ENCODE measurements at regions of chr15 and their contacts with region 1.

Region 1: GRCh38 chr15:98647774-98648653 is at the start of gene IGF1R:
- DNase-seq: peak; percentile 75 to 94 (median 85)
- ATAC-seq: peak; percentile 74
- H3K4me3 ChIP-seq: peak within 1 kb of the TSS; percentile 74 to 88
- H3K4me3 Mint-ChIP-seq: peak within 1 kb of the TSS; percentile 89
- H3K27ac ChIP-seq: peak within 1 kb of the TSS in 1 of 2 experiments; percentile 88
- H3K27ac Mint-ChIP-seq: peak within 1 kb of the TSS; percentile 95
- H3K4me1 ChIP-seq: peaks cover 9% of the 10 kb centered on the region
- H3K4me1 Mint-ChIP-seq: peaks cover 28% of the 10 kb centered on the region
- H3K27me3 ChIP-seq: peaks cover 0 to 10% of the 10 kb centered on the region in 2 experiments
- H3K27me3 Mint-ChIP-seq: peaks cover 15% of the 10 kb centered on the region
- CTCF ChIP-seq: no peak
- total RNA-seq, gene IGF1R: 30.1 to 33.8 TPM

Region 2: GRCh38 chr15:98581715-98582114 is 66.3 kb before region 1 on chr15:
- CTCF ChIA-PET with region 1: interaction called, 11 read pairs
- POLR2A ChIA-PET with region 1: interaction called, 4 read pairs
- intact Hi-C with region 1: loop called in 1 of 2 experiments (anchors 1 kb)
- DNase-seq: peak in 2 of 9 experiments; percentile 8 to 44
- ATAC-seq: peak; percentile 56
- H3K4me3 ChIP-seq: no peak overlapping the region
- H3K4me3 Mint-ChIP-seq: no peak overlapping the region
- H3K27ac ChIP-seq: no peak overlapping the region
- H3K27ac Mint-ChIP-seq: no peak overlapping the region
- H3K4me1 ChIP-seq: peaks cover 10% of the 10 kb centered on the region
- H3K4me1 Mint-ChIP-seq: peaks cover 5% of the 10 kb centered on the region
- H3K27me3 ChIP-seq: peaks cover 7 to 13% of the 10 kb centered on the region in 2 experiments
- H3K27me3 Mint-ChIP-seq: peaks cover 32% of the 10 kb centered on the region
- CTCF ChIP-seq: peak; percentile 43

Region 3: DNA sequence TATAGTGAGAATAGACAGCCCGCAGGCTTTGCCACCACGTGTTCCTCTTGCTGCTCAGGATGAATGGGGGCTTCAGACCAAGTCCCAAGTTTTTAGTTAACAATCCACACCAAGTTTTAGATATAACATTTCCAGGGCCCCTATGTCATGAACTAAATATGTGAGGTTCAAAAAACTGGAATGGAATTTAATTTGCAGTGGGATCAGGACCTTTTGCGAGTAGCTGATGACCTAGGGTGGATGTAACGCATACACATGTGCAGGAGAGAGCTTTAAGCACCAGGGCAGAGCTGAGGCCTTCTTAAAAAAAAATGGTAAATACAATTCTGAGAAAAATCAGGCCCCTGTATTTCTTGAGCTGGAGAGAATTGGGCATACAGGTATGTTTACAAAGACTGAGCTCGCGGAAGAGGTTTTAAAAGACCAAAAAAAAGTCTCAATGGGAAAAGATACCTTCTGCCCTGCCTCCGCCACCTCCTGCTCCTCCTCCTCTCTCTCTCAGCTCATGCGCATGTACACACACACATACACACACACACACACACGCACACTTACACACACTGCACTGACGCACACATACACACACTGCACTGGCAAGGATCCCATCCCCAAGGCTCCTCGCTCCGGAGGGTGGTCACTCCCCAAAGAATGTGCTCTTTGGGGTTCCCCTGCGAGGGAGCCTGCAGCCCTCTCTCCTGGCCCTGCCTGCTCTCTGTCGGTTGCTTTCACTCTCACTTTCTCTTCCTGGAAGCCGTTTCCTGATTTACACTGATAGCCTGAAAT is 47.9 kb before region 1 on chr15:
- CTCF ChIA-PET with region 1: no interaction called
- POLR2A ChIA-PET with region 1: interaction called, 6 read pairs
- intact Hi-C with region 1: loop called in 1 of 2 experiments (anchors 1 kb)
- DNase-seq: peak in 8 of 9 experiments; percentile 4 to 66 (median 27)
- ATAC-seq: peak; percentile 79
- H3K4me3 ChIP-seq: peak overlapping the region; percentile 18 to 40
- H3K4me3 Mint-ChIP-seq: peak overlapping the region; percentile 93
- H3K27ac ChIP-seq: peak overlapping the region; percentile 6 to 17
- H3K27ac Mint-ChIP-seq: peak overlapping the region; percentile 93
- H3K4me1 ChIP-seq: peaks cover 10% of the 10 kb centered on the region
- H3K4me1 Mint-ChIP-seq: peaks cover 20% of the 10 kb centered on the region
- H3K27me3 ChIP-seq: no peaks in the 10 kb centered on the region
- H3K27me3 Mint-ChIP-seq: no peaks in the 10 kb centered on the region
- CTCF ChIP-seq: no peak

Region 4: GRCh38 chr15:98658831-98659699 is 11.1 kb after region 1 on chr15:
- CTCF ChIA-PET with region 1: interaction called, 9 read pairs
- POLR2A ChIA-PET with region 1: interaction called, 5 read pairs
- intact Hi-C with region 1: loop called in 1 of 2 experiments (anchors 1 kb)
- DNase-seq: peak in 6 of 9 experiments; percentile 7 to 70 (median 36)
- ATAC-seq: peak; percentile 66
- H3K4me3 ChIP-seq: no peak overlapping the region
- H3K4me3 Mint-ChIP-seq: no peak overlapping the region
- H3K27ac ChIP-seq: no peak overlapping the region
- H3K27ac Mint-ChIP-seq: no peak overlapping the region
- H3K4me1 ChIP-seq: peaks cover 21% of the 10 kb centered on the region
- H3K4me1 Mint-ChIP-seq: peaks cover 52% of the 10 kb centered on the region
- H3K27me3 ChIP-seq: no peaks in the 10 kb centered on the region
- H3K27me3 Mint-ChIP-seq: peaks cover 1% of the 10 kb centered on the region
- CTCF ChIP-seq: peak; percentile 96

Region 5: DNA sequence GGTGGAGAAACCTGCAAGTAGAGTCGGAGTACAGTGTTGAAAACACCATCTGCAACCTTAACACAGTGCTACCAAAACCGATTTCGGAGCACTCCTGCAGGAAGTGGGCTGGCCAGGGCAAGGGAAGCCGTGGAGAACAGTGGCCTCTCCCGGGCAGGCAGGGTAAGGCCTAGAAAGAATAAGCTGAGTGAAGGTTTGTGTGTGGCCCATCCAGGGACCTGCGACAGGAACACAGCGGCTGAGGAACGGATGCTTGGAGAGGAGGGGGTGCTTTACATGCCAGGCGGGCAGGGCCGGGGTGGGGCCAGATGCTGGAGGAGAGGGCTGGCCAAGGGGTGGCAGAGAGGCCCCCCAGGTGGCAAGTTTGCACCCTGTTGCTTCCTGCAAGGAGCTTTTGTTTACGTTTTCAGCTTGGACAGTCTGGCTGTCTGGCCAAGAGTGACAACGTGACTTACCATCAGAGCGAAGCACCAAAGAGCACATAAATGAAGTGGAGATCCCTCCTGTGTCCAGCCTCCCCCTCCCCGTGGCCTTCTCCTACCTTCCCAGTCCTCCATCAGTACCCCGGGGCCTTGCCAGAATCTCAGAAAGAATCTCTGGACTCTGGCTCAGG is 203.1 kb after region 1 on chr15:
- CTCF ChIA-PET with region 1: no interaction called
- POLR2A ChIA-PET with region 1: interaction called, 3 read pairs
- intact Hi-C with region 1: loop called in 1 of 2 experiments (anchors 1 kb)
- DNase-seq: peak; percentile 34 to 83 (median 64)
- ATAC-seq: peak; percentile 67
- H3K4me3 ChIP-seq: peak overlapping the region in 1 of 2 experiments; percentile 59
- H3K4me3 Mint-ChIP-seq: peak overlapping the region; percentile 94
- H3K27ac ChIP-seq: peak overlapping the region in 1 of 2 experiments; percentile 70
- H3K27ac Mint-ChIP-seq: peak overlapping the region; percentile 94
- H3K4me1 ChIP-seq: peaks cover 31% of the 10 kb centered on the region
- H3K4me1 Mint-ChIP-seq: peaks cover 54% of the 10 kb centered on the region
- H3K27me3 ChIP-seq: no peaks in the 10 kb centered on the region
- H3K27me3 Mint-ChIP-seq: no peaks in the 10 kb centered on the region
- CTCF ChIP-seq: peak; percentile 68

Region 6: DNA sequence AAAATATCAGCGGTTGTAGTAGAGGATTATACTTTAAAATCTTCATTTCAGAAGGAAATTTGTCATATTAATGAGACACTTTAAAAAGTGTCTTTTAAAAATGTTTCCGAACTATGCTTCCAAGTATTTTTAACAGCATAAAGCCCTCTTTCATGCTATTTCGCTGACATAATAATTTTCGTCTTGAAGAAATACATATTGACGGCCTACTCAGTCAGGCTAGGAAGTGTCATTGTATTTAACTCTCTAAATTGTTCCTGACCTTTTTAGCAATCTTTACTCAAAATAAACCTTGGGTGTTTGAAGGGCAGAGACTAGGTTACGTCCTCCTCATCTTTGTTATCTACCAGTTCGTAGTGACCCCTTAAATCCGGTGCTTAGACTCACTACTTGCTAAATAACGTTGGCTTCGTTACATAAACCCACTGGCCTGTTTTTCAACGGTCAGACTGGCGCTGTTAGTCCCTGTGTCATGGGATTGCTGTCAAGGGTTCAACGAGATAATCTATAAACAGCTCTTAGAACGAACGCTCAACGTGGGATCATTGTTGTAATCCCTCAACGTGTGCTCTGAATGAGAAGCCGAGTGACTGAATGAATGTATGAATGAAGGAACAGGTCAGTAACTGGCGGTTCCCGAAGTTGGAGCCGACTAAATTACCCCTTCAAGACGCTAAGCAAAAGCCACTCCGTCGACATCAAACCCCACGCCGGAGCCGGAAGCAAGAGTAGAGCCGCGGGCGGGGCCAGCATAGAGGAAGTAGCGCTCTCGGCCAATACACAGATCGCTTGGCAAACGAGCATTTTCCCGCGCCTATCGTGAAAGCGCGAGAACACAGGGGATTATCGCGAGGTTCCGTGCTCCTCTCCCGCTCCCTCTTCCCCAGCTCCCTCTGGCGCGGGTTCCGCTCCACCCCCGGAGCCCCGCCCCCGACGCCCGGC is 602.8 kb after region 1 on chr15:
- CTCF ChIA-PET with region 1: no interaction called
- POLR2A ChIA-PET with region 1: interaction called, 4 read pairs
- intact Hi-C with region 1: loop called in 1 of 2 experiments (anchors 5 kb)
- DNase-seq: peak; percentile 83 to 98 (median 92)
- ATAC-seq: peak; percentile 95
- H3K4me3 ChIP-seq: peak overlapping the region; percentile 55 to 59
- H3K4me3 Mint-ChIP-seq: peak overlapping the region; percentile 90
- H3K27ac ChIP-seq: peak overlapping the region; percentile 25 to 79
- H3K27ac Mint-ChIP-seq: peak overlapping the region; percentile 89
- H3K4me1 ChIP-seq: peaks cover 19% of the 10 kb centered on the region
- H3K4me1 Mint-ChIP-seq: peaks cover 29% of the 10 kb centered on the region
- H3K27me3 ChIP-seq: no peaks in the 10 kb centered on the region
- H3K27me3 Mint-ChIP-seq: no peaks in the 10 kb centered on the region
- CTCF ChIP-seq: no peak

Region 7: DNA sequence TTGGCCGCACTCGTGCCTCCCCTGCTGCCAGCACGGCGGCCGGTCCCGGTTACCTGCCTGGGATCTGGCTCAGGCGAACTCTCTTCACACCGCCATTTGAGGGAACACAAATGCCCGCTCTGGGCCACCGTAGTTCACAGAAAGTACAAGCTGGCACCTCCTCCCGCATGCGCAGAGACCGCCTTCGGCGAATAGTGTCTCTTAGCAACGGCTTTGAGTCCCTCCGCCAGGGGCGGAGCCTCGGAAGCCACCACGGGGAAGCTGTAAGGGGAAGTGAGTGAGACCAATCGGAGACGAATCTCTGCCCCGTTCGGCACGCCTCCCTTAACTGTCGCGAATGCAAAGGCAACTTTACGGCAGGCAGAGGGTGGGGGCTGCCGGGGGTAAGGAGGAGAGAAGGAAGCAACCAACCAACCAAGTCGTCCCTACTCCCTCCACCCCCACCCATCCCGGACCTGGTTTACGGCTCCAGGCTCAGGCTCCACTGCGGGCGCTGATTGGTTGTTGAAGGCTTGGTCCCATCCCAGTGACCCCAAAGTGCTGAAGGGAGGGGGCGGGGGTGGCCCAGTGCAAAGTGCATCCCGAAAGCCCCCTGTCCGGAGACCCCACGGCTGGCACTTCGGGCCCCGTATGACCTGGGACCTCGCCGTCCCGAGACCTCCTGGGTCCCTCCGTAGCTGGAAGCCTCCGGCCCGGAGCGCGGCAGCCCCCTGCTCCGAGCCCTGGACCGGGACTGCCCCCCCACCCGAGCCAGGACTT is 1954.2 kb after region 1 on chr15 and contains the starts of genes ASB7 and LINS1:
- CTCF ChIA-PET with region 1: no interaction called
- POLR2A ChIA-PET with region 1: no interaction called
- intact Hi-C with region 1: loop called in 1 of 2 experiments (anchors 10 kb)
- DNase-seq: peak; percentile 99 to 100 (median 100)
- ATAC-seq: peak; percentile 89
- H3K4me3 ChIP-seq: peak within 1 kb of the TSS; percentile 90 to 95
- H3K4me3 Mint-ChIP-seq: no peak within 1 kb of the TSS
- H3K27ac ChIP-seq: peak within 1 kb of the TSS; percentile 71 to 94
- H3K27ac Mint-ChIP-seq: peak within 1 kb of the TSS; percentile 93
- H3K4me1 ChIP-seq: peaks cover 58% of the 10 kb centered on the region
- H3K4me1 Mint-ChIP-seq: peaks cover 64% of the 10 kb centered on the region
- H3K27me3 ChIP-seq: no peaks in the 10 kb centered on the region
- H3K27me3 Mint-ChIP-seq: no peaks in the 10 kb centered on the region
- CTCF ChIP-seq: no peak
- total RNA-seq, gene ASB7: 17.2 to 19.9 TPM
- total RNA-seq, gene LINS1: 42.8 to 45.9 TPM